ENCODE measurements at regions of chr17 and their contacts with region 1.

Region 1: GRCh38 chr17:75784473-75785015 is at the start of gene UNK:
- DNase-seq: peak; percentile 99
- H3K4me3 Mint-ChIP-seq: peak within 1 kb of the TSS; percentile 80
- H3K27ac Mint-ChIP-seq: peak within 1 kb of the TSS; percentile 96
- H3K4me1 Mint-ChIP-seq: peaks cover 19% of the 10 kb centered on the region
- H3K27me3 Mint-ChIP-seq: no peaks in the 10 kb centered on the region
- CTCF ChIP-seq: no peak
- total RNA-seq, gene UNK: 12.3 and 16.0 TPM in 2 replicates

Region 2: DNA sequence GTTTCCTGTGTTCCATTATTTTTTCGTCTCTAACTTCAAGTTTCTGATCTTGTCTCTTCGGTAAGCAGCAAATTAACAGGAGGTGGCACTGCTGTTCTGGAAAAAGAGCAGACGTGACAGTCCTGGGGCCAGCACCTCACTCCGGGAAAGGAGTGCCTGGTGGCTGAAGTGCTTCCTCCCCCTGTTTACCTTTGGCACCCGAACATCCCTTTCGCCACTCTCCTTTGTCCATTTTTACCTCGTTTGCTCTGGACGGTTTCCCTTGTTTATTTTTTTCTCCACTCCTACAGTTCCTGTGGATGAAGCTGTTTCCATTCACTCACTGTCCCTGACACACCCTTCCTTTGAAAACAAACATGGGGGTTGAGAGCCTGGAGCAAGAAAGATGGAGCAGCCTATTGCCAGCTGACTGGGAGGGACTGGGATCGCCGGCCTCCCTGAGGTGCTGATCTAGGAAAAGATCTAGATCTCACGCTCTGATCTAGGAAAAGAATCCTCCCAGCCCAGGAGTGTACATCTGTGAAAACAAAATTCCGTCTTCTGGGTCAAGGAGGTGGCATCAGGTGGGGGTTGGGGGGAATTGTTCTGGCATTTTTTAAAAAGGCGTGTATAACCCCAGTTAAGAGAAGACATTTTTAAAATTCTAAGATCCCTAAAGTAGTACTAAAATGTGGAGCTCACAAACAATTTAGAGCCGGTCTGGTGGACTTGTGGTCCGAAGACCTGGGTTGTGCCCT is 104.7 kb before region 1 on chr17:
- CTCF ChIA-PET with region 1: interaction called, 5 read pairs
- POLR2A ChIA-PET with region 1: interaction called, 31 read pairs
- intact Hi-C with region 1: no loop called
- DNase-seq: peak; percentile 92
- H3K4me3 Mint-ChIP-seq: peak overlapping the region; percentile 60
- H3K27ac Mint-ChIP-seq: peak overlapping the region; percentile 91
- H3K4me1 Mint-ChIP-seq: peaks cover 40% of the 10 kb centered on the region
- H3K27me3 Mint-ChIP-seq: no peaks in the 10 kb centered on the region
- CTCF ChIP-seq: peak; percentile 60

Region 3: GRCh38 chr17:75693500-75694481 is 90.8 kb before region 1 on chr17:
- CTCF ChIA-PET with region 1: no interaction called
- POLR2A ChIA-PET with region 1: interaction called, 17 read pairs
- intact Hi-C with region 1: no loop called
- DNase-seq: peak; percentile 99
- H3K4me3 Mint-ChIP-seq: peak overlapping the region; percentile 28
- H3K27ac Mint-ChIP-seq: peak overlapping the region; percentile 96
- H3K4me1 Mint-ChIP-seq: peaks cover 73% of the 10 kb centered on the region
- H3K27me3 Mint-ChIP-seq: no peaks in the 10 kb centered on the region
- CTCF ChIP-seq: no peak

Region 4: DNA sequence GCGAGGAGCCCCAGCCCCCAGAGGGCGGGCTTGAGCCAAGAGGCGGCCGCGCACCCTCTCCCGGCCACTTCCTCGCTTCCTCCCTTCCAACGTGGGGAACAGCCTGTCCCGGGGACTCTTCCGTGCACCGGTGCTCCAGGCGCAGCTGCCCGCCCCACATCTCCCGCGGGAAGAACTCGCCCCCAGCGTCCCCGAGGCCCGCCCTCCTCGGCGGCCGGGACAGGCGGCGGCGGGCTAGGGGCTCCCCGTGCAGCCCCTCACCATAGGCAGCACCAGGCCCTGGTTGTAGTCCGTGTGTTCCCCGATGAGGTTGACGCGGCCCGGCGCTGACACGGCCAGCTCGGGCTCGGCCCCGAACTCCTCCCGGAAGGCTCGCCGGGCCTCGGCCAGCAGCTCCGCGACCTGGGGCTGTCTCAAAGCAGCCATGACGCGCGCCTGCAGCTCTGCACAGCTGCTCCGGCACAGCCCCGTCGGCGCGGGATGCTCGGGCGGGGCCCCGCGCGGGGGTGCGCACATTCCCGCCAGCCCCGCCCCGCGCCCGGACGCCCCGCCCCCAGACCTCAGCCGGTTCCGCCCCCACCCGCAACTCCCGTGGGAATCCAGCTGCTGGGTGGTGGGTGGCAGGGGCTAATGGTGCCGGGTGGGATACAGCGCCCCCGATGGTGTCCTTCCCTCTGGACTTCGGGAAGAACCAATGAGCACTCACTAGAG is 19.7 kb before region 1 on chr17 and contains the start of gene GALK1:
- CTCF ChIA-PET with region 1: interaction called, 5 read pairs
- POLR2A ChIA-PET with region 1: interaction called, 153 read pairs
- intact Hi-C with region 1: no loop called
- DNase-seq: peak; percentile 69
- H3K4me3 Mint-ChIP-seq: peak within 1 kb of the TSS; percentile 69
- H3K27ac Mint-ChIP-seq: peak within 1 kb of the TSS; percentile 35
- H3K4me1 Mint-ChIP-seq: peaks cover 15% of the 10 kb centered on the region
- H3K27me3 Mint-ChIP-seq: no peaks in the 10 kb centered on the region
- CTCF ChIP-seq: peak; percentile 53
- total RNA-seq, gene GALK1: 8.7 and 9.8 TPM in 2 replicates

Region 5: GRCh38 chr17:75814900-75815373 is 30.4 kb after region 1 on chr17:
- CTCF ChIA-PET with region 1: no interaction called
- POLR2A ChIA-PET with region 1: interaction called, 38 read pairs
- intact Hi-C with region 1: loop called (anchors 5 kb)
- DNase-seq: peak; percentile 81
- H3K4me3 Mint-ChIP-seq: no peak overlapping the region
- H3K27ac Mint-ChIP-seq: peak overlapping the region; percentile 36
- H3K4me1 Mint-ChIP-seq: peaks cover 11% of the 10 kb centered on the region
- H3K27me3 Mint-ChIP-seq: no peaks in the 10 kb centered on the region
- CTCF ChIP-seq: no peak

Region 6: GRCh38 chr17:75904749-75905521 is 120.4 kb after region 1 on chr17 and contains the start of gene MRPL38:
- CTCF ChIA-PET with region 1: interaction called, 3 read pairs
- POLR2A ChIA-PET with region 1: interaction called, 12 read pairs
- intact Hi-C with region 1: no loop called
- DNase-seq: peak; percentile 93
- H3K4me3 Mint-ChIP-seq: peak within 1 kb of the TSS; percentile 91
- H3K27ac Mint-ChIP-seq: peak within 1 kb of the TSS; percentile 92
- H3K4me1 Mint-ChIP-seq: peaks cover 16% of the 10 kb centered on the region
- H3K27me3 Mint-ChIP-seq: no peaks in the 10 kb centered on the region
- CTCF ChIP-seq: peak; percentile 96
- total RNA-seq, gene MRPL38: 97.9 and 111 TPM in 2 replicates

Region 7: DNA sequence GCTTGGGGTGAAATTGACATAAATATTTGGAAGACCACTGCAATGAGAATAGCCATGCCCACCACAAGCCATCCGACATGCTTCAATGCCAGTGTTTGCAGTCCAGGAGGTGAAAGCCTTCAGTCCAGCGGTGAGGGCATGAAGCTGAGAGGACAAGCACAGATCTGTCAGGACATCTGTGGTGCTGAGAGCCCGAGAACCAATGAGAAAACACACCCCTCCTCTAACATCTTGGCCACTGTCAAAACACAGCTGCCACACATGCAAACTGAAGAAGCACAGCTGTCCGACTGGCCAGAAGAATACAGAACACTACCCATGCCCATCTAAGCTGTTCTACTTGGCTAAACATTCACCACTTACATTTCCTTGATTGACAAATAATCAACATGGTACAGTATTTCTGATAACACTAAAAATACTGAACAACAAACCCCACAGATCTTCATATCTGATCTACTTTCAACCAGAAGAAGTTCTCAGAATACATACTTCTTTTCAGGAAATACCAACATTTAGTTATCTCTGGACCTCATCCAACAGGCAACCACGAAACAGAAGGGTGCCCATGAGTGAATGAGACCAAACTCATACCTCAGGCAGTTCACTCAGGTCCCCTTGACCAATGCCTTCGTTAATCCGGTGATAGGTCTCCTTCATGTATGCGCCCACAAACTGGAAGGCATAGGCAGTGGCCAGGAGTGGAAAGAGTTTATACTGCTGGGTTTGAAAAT is 166.4 kb after region 1 on chr17:
- CTCF ChIA-PET with region 1: no interaction called
- POLR2A ChIA-PET with region 1: no interaction called
- intact Hi-C with region 1: no loop called
- DNase-seq: no peak
- H3K4me3 Mint-ChIP-seq: no peak overlapping the region
- H3K27ac Mint-ChIP-seq: no peak overlapping the region
- H3K4me1 Mint-ChIP-seq: no peaks in the 10 kb centered on the region
- H3K27me3 Mint-ChIP-seq: no peaks in the 10 kb centered on the region
- CTCF ChIP-seq: no peak

Region 8: GRCh38 chr17:76072148-76072858 is 287.8 kb after region 1 on chr17 and contains the start of gene SRP68:
- CTCF ChIA-PET with region 1: no interaction called
- POLR2A ChIA-PET with region 1: no interaction called
- intact Hi-C with region 1: no loop called
- DNase-seq: peak; percentile 90
- H3K4me3 Mint-ChIP-seq: peak within 1 kb of the TSS; percentile 90
- H3K27ac Mint-ChIP-seq: peak within 1 kb of the TSS; percentile 95
- H3K4me1 Mint-ChIP-seq: peaks cover 4% of the 10 kb centered on the region
- H3K27me3 Mint-ChIP-seq: peaks cover 30% of the 10 kb centered on the region
- CTCF ChIP-seq: no peak
- total RNA-seq, gene SRP68: 80.8 and 106 TPM in 2 replicates